ENCODE measurements at regions of chr17 and their contacts with region 1.

Region 1: GRCh38 chr17:58517734-58518609 is 3.5 kb upstream of the MTMR4 start:
- DNase-seq: peak; percentile 98 to 100 (median 99)
- ATAC-seq: peak; percentile 81
- H3K4me3 ChIP-seq: peak overlapping the region; percentile 72
- H3K4me3 Mint-ChIP-seq: peak overlapping the region; percentile 90
- H3K27ac ChIP-seq: peak overlapping the region; percentile 78 to 80
- H3K27ac Mint-ChIP-seq: peak overlapping the region; percentile 85
- H3K4me1 ChIP-seq: peaks cover 48% of the 10 kb centered on the region
- H3K4me1 Mint-ChIP-seq: peaks cover 44% of the 10 kb centered on the region
- H3K27me3 ChIP-seq: no peaks in the 10 kb centered on the region
- H3K27me3 Mint-ChIP-seq: no peaks in the 10 kb centered on the region
- CTCF ChIP-seq: no peak

Region 2: DNA sequence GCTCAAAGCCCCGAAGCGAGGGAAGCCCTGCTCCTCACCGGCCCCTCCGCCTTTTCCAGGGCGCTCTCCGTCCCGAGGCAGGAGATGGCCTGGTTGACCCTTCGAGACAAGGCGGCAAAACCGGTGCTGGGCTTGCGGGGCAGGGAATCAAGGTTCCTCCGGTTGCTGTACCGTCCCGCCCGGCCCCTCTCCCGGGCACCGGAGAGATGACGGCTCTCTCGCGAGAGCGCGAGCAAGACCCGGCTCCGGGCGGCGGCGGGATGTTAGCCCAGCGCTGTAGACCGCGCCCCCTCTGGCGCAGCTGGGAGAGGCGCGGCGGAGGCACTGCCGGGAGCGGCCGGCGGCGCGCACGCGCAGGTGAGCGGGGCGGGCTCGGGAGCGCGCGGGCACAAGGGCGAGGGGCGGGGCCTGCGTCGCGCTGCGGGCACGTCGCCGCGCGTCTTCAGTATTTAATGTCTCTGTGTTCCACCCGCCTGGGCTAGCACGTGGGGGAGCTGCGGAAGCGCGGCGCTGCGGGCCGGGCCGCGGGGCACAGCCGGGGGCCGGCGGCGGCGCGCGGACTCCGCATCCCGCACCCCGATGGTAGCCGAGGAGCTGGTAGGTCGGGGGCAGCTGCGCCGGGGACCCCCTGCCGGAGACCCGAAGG is 1433.0 kb before region 1 on chr17 and contains the start of gene AKAP1:
- CTCF ChIA-PET with region 1: no interaction called
- POLR2A ChIA-PET with region 1: no interaction called
- intact Hi-C with region 1: loop called in 1 of 2 experiments (anchors 5 kb)
- DNase-seq: peak; percentile 87 to 99 (median 94)
- ATAC-seq: peak; percentile 88
- H3K4me3 ChIP-seq: peak within 1 kb of the TSS; percentile 89
- H3K4me3 Mint-ChIP-seq: peak within 1 kb of the TSS; percentile 95
- H3K27ac ChIP-seq: peak within 1 kb of the TSS; percentile 84 to 85
- H3K27ac Mint-ChIP-seq: peak within 1 kb of the TSS; percentile 89
- H3K4me1 ChIP-seq: peaks cover 20% of the 10 kb centered on the region
- H3K4me1 Mint-ChIP-seq: peaks cover 36% of the 10 kb centered on the region
- H3K27me3 ChIP-seq: no peaks in the 10 kb centered on the region
- H3K27me3 Mint-ChIP-seq: no peaks in the 10 kb centered on the region
- CTCF ChIP-seq: no peak
- total RNA-seq, gene AKAP1: 20.3 to 23.1 TPM

Region 3: DNA sequence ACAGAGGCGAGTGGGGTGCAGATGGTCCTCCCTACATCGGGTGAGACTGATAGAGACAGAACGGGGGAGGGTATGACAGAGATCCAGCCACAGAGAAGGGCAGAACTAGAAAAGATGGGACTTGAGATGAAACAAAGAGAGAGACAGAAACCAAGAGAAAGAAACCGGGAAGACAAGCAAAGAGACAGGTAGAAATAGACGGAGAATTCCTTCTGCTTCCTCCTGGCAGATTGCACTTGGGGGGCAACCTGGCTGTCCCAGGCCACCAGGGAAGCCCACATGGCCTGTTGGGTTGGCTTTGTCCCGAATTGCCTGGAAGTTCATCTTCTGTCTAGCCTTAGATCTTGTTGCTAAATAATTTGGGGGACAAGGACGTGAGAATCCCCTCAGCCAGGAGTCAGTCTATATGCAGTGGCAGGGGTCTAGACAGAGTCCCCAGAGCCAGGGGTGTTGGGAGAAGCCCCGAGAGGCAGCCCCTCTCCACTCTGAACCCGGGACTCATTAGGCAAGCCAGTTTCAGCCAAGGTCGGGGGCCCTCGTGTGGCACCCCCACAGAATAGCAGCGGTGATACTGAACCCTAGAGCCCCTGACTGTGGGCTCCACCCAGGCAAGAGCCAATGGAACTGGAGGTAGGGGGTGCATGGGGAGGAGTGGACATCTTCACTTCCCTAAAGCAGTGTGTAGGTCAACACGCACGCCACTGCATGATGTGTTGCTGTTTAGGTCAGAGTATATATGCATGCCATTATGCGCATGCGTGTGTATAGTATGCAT is 188.8 kb before region 1 on chr17:
- CTCF ChIA-PET with region 1: no interaction called
- POLR2A ChIA-PET with region 1: interaction called, 8 read pairs
- intact Hi-C with region 1: loop called (anchors 5 to 10 kb)
- DNase-seq: peak; percentile 47 to 87 (median 72)
- ATAC-seq: peak; percentile 39
- H3K4me3 ChIP-seq: peak overlapping the region; percentile 84
- H3K4me3 Mint-ChIP-seq: peak overlapping the region; percentile 90
- H3K27ac ChIP-seq: peak overlapping the region; percentile 84 to 87
- H3K27ac Mint-ChIP-seq: peak overlapping the region; percentile 84
- H3K4me1 ChIP-seq: peaks cover 62% of the 10 kb centered on the region
- H3K4me1 Mint-ChIP-seq: peaks cover 53% of the 10 kb centered on the region
- H3K27me3 ChIP-seq: no peaks in the 10 kb centered on the region
- H3K27me3 Mint-ChIP-seq: no peaks in the 10 kb centered on the region
- CTCF ChIP-seq: peak; percentile 83

Region 4: DNA sequence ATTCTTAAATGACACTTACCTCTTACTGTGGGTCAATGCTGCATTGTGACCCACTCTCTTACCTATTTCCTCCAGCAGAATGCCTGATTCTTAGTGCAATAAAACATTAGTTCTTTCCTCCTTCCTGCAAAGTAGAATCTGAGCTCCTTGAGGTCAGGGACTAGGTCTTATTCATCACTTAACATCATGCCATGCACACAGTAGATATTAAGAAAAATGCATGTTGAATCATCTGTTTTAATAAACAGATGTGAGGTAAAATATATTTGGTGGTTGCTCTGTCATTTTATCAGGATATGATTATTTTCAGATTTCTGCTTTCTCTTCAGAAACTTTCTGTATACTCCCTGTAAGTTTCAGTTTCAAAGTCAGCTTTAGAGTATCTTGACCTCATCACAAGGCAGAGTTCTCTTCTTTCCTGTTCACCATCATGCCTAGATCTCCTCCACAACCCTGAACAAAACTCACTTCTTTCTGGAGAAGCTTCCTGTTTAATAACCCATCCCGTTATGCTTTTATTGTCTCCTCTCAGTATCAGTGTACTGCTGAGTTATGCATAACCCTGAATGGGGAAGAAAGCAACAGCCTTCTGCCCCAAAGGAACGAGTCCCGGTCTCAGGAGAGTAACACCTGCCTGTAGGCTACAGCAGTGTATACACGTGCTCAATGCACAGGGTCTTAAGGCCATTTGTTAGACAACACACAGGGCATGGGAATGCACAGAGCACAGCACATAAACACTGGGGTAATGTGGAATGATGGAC is 135.7 kb before region 1 on chr17:
- CTCF ChIA-PET with region 1: no interaction called
- POLR2A ChIA-PET with region 1: no interaction called
- intact Hi-C with region 1: no loop called
- DNase-seq: peak in 1 of 14 experiments; percentile 45
- ATAC-seq: no peak
- H3K4me3 ChIP-seq: no peak overlapping the region
- H3K4me3 Mint-ChIP-seq: peak overlapping the region; percentile 1
- H3K27ac ChIP-seq: no peak overlapping the region
- H3K27ac Mint-ChIP-seq: peak overlapping the region; percentile 53
- H3K4me1 ChIP-seq: peaks cover 30% of the 10 kb centered on the region
- H3K4me1 Mint-ChIP-seq: peaks cover 46% of the 10 kb centered on the region
- H3K27me3 ChIP-seq: no peaks in the 10 kb centered on the region
- H3K27me3 Mint-ChIP-seq: no peaks in the 10 kb centered on the region
- CTCF ChIP-seq: no peak

Region 5: DNA sequence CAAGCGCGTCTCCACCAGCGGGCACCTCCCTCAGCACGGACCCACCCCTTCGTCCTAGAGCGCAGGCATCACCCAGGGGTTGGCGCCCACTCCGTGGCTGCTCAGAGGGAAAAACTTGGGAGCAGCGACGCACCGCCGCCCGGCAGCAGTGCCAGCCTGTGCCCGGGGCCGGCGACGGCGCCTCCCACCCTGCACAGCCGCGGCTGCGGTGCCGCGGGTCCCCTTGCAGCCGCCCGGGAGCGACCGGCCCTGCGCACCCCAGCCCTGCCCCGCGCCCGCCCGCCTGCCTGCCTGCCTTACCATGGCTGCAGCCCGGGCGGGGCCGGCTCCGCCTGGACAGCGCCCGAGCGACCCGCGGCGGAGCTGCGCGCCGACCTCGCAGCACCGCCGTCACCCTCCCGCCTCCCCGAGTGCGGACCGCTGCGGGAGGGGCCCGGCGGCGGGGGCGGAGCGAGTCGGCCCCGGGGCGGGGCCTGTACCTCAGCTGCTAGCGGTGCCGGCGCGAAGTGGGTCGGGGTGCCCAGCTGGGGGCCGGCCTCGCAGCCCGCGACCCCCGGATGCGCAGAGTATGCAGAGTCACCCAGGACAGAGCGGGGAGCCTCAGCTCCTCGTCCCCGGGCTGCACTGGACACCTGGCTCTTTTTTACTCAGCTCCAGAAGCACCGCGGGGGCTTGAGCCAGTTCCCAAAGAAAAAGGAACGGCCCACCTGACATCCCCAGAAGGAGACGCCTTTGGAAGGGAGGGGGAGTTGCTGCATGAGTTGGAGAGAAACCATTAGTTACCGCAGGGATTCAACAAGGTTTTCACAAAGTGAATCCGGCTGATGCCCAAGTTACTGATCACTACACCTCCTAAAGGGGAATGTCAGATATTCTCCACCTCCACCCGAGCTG is 13.9 kb after region 1 on chr17:
- CTCF ChIA-PET with region 1: interaction called, 8 read pairs
- POLR2A ChIA-PET with region 1: interaction called, 12 read pairs
- intact Hi-C with region 1: no loop called
- DNase-seq: peak; percentile 23 to 82 (median 61)
- ATAC-seq: peak; percentile 98
- H3K4me3 ChIP-seq: peak overlapping the region; percentile 45
- H3K4me3 Mint-ChIP-seq: peak overlapping the region; percentile 66
- H3K27ac ChIP-seq: no peak overlapping the region
- H3K27ac Mint-ChIP-seq: no peak overlapping the region
- H3K4me1 ChIP-seq: peaks cover 19% of the 10 kb centered on the region
- H3K4me1 Mint-ChIP-seq: no peaks in the 10 kb centered on the region
- H3K27me3 ChIP-seq: peaks cover 6 to 14% of the 10 kb centered on the region in 2 experiments
- H3K27me3 Mint-ChIP-seq: peaks cover 44% of the 10 kb centered on the region
- CTCF ChIP-seq: no peak

Region 6: DNA sequence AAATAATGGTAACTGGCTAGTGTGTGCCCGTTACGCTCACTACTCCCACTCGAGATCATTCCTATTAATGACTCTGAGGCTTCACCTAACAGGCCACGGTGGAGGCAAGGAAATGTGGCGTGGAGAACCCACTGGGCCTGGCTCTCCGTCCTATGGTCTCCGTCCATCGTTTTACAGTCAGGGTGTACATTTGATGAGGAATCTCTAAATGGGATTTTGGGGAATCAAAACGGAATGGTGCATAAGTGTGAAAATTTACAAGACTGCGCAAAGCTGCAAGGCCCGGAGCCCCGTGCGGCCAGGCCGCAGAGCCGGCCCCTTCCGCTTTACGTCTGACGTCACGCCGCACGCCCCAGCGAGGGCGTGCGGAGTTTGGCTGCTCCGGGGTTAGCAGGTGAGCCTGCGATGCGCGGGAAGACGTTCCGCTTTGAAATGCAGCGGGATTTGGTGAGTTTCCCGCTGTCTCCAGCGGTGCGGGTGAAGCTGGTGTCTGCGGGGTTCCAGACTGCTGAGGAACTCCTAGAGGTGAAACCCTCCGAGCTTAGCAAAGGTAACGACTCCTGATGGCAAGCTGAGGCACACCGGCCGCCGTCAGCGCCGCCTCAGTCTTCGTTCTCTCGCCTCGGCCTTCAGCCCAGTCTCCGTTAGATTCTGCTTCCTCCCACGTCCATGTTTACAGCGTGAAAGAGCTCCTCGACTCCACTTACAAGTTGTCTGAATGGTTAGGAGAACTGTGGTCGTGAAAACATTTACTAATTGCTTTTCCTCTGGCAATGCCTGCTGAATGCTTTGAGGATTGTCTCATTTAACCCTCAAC is 174.5 kb after region 1 on chr17 and contains the start of gene RAD51C:
- CTCF ChIA-PET with region 1: interaction called, 7 read pairs
- POLR2A ChIA-PET with region 1: interaction called, 21 read pairs
- intact Hi-C with region 1: loop called (anchors 5 kb)
- DNase-seq: peak; percentile 70 to 92 (median 84)
- ATAC-seq: peak; percentile 96
- H3K4me3 ChIP-seq: peak within 1 kb of the TSS; percentile 79
- H3K4me3 Mint-ChIP-seq: peak within 1 kb of the TSS; percentile 93
- H3K27ac ChIP-seq: peak within 1 kb of the TSS; percentile 66 to 83
- H3K27ac Mint-ChIP-seq: peak within 1 kb of the TSS; percentile 86
- H3K4me1 ChIP-seq: peaks cover 13% of the 10 kb centered on the region
- H3K4me1 Mint-ChIP-seq: peaks cover 28% of the 10 kb centered on the region
- H3K27me3 ChIP-seq: no peaks in the 10 kb centered on the region
- H3K27me3 Mint-ChIP-seq: no peaks in the 10 kb centered on the region
- CTCF ChIP-seq: no peak
- total RNA-seq, gene RAD51C: 10.4 to 11.6 TPM

Region 7: GRCh38 chr17:58755577-58756245 is 237.7 kb after region 1 on chr17 and contains the start of gene PPM1E:
- CTCF ChIA-PET with region 1: no interaction called
- POLR2A ChIA-PET with region 1: no interaction called
- intact Hi-C with region 1: no loop called
- DNase-seq: peak in 12 of 14 experiments; percentile 8 to 57 (median 26)
- ATAC-seq: peak; percentile 73
- H3K4me3 ChIP-seq: peak within 1 kb of the TSS; percentile 67
- H3K4me3 Mint-ChIP-seq: peak within 1 kb of the TSS; percentile 91
- H3K27ac ChIP-seq: no peak within 1 kb of the TSS
- H3K27ac Mint-ChIP-seq: no peak within 1 kb of the TSS
- H3K4me1 ChIP-seq: peaks cover 14% of the 10 kb centered on the region
- H3K4me1 Mint-ChIP-seq: peaks cover 6% of the 10 kb centered on the region
- H3K27me3 ChIP-seq: peaks cover 34 to 46% of the 10 kb centered on the region in 2 experiments
- H3K27me3 Mint-ChIP-seq: peaks cover 76% of the 10 kb centered on the region
- CTCF ChIP-seq: no peak
- total RNA-seq, gene PPM1E: not detected

Region 8: DNA sequence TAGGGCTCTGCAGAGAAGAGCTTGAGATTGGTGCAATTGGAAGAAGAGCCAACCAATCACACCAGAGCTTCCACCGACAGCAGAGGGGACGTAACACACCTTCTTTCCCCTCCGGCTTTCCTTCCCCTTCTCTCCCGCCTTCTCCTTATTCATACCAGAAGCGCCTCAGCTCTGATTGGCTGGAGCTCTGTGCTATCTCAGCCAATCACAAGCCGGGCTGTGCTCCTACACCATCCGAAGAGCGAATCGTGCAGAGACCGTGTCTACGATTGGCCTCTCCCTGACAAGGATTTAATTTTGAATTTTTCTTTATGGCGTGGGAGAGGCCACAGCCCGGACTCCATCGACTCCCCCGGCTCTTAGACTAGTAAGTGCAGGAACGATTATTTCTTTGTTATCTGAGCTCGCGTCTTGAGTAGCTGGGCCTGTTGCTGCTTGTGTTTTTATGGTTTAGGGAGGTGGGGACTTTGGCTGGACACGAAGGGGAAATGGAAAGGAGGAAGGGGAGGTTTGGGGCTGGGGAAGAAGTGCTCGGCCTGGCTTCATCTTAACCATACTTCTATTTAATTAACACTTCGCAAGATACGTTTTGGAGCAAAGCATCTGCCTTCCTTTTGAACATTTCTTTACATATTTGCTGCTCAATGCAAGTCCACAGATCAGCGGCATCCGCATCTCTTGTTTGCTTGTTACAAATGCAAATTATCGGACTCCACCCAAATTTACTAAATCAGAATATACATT is 637.6 kb after region 1 on chr17 and contains the start of gene PRR11:
- CTCF ChIA-PET with region 1: no interaction called
- POLR2A ChIA-PET with region 1: interaction called, 6 read pairs
- intact Hi-C with region 1: loop called (anchors 1 to 2 kb)
- DNase-seq: peak; percentile 81 to 99 (median 88)
- ATAC-seq: peak; percentile 84
- H3K4me3 ChIP-seq: peak within 1 kb of the TSS; percentile 87
- H3K4me3 Mint-ChIP-seq: no peak within 1 kb of the TSS
- H3K27ac ChIP-seq: peak within 1 kb of the TSS; percentile 39 to 73
- H3K27ac Mint-ChIP-seq: no peak within 1 kb of the TSS
- H3K4me1 ChIP-seq: peaks cover 27% of the 10 kb centered on the region
- H3K4me1 Mint-ChIP-seq: peaks cover 38% of the 10 kb centered on the region
- H3K27me3 ChIP-seq: no peaks in the 10 kb centered on the region
- H3K27me3 Mint-ChIP-seq: no peaks in the 10 kb centered on the region
- CTCF ChIP-seq: no peak
- total RNA-seq, gene PRR11: 0.69 to 0.92 TPM